ENCODE measurements at regions of chrX and their contacts with region 1.

Region 1: GRCh38 chrX:149074398-149074797 is 430.7 kb downstream of the IDS start:
- DNase-seq: peak; percentile 0
- H3K4me3 ChIP-seq: no peak overlapping the region
- H3K27ac ChIP-seq: no peak overlapping the region
- H3K4me1 ChIP-seq: no peaks in the 10 kb centered on the region
- CTCF ChIP-seq: no peak

Region 2: GRCh38 chrX:148049441-148049840 is 1025.0 kb before region 1 on chrX:
- CTCF ChIA-PET with region 1: no interaction called
- POLR2A ChIA-PET with region 1: no interaction called
- intact Hi-C with region 1: loop called (anchors 10 kb)
- DNase-seq: peak; percentile 60
- H3K4me3 ChIP-seq: no peak overlapping the region
- H3K27ac ChIP-seq: no peak overlapping the region
- H3K4me1 ChIP-seq: no peaks in the 10 kb centered on the region
- CTCF ChIP-seq: peak; percentile 82

Region 3: DNA sequence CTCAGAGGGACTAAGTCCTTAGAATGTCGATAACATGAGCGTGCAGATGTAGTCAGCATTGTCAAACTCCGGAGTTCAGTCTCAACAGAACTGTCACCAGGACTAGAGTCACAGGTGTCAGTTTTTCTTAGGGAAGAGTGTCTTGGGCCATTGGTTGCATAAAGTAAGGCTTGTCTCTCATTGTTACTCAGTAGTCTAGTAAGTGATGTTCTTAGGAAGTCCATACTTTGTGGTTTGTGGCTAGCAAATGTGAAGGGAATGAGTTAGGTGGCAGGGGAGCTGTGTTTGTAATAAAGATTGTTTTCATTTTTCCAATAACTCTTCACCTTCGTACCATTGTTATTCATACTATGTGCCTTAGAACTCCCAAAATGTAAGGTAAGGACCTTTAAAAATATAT is 454.4 kb before region 1 on chrX:
- CTCF ChIA-PET with region 1: no interaction called
- POLR2A ChIA-PET with region 1: no interaction called
- intact Hi-C with region 1: no loop called
- DNase-seq: no peak
- H3K4me3 ChIP-seq: no peak overlapping the region
- H3K27ac ChIP-seq: no peak overlapping the region
- H3K4me1 ChIP-seq: peaks cover 17% of the 10 kb centered on the region
- CTCF ChIP-seq: no peak

Measured in OCI-LY7 (cell line).